ENCODE measurements at regions of chrX and their contacts with region 1.

Region 1: GRCh38 chrX:93874554-93874953 is 200.5 kb downstream of the FAM133A start:
- DNase-seq: peak in 1 of 5 donors; percentile 4
- H3K4me3 ChIP-seq: no peak overlapping the region
- H3K4me3 Mint-ChIP-seq: no peak overlapping the region
- H3K27ac ChIP-seq: no peak overlapping the region
- H3K27ac Mint-ChIP-seq: no peak overlapping the region
- H3K4me1 ChIP-seq: no peaks in the 10 kb centered on the region
- H3K4me1 Mint-ChIP-seq: peaks cover 0 to 2% (median 0%) of the 10 kb centered on the region in 4 donors
- H3K27me3 ChIP-seq: no peaks in the 10 kb centered on the region
- H3K27me3 Mint-ChIP-seq: no peaks in the 10 kb centered on the region

Region 2: DNA sequence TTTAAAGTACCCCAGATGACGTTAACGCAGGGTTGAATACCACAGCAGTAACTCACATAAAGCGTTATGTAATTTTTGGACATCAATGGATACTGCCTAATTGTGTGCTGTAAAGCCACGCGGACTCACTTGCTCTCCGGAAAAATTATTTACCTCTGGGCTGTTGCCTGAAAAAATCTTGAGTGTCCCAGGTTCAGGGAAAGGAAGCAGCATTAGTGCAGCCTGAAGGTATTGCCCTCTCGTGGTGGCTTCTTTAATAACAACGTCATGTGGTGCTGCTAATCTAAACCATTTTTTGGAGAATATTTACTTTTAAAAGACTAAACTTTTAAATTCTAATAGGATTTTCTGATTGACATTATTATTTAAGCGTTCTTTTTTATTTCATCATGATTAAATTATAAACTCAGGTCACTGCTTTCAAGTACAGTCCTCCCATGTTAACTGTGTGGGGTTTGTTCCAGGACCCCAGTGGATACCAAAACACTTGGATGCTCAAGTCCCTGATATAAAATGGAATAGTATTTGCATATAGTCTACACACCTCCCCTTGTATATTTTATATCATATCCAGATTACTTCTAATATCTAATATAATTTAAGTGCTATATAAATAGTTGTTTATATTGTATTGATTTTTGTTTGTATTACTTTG is 184.3 kb after region 1 on chrX:
- CTCF ChIA-PET with region 1: no interaction called
- POLR2A ChIA-PET with region 1: no interaction called
- intact Hi-C with region 1: loop called (anchors 5 kb)
- DNase-seq: peak in 1 of 5 donors; percentile 3
- H3K4me3 ChIP-seq: no peak overlapping the region
- H3K4me3 Mint-ChIP-seq: no peak overlapping the region
- H3K27ac ChIP-seq: no peak overlapping the region
- H3K27ac Mint-ChIP-seq: no peak overlapping the region
- H3K4me1 ChIP-seq: no peaks in the 10 kb centered on the region
- H3K4me1 Mint-ChIP-seq: peaks cover 0 to 4% (median 0%) of the 10 kb centered on the region in 4 donors
- H3K27me3 ChIP-seq: no peaks in the 10 kb centered on the region
- H3K27me3 Mint-ChIP-seq: no peaks in the 10 kb centered on the region

Measured in CD4-positive, alpha-beta memory T cell (primary cell).